ENCODE measurements at regions of chr7 and their contacts with region 1.

Region 1: GRCh38 chr7:142782922-142783900 is 12.4 kb downstream of the PRSS2 start:
- DNase-seq: peak; percentile 75
- H3K4me3 ChIP-seq: peak overlapping the region; percentile 38 to 49 (median 43)
- H3K27ac ChIP-seq: no peak overlapping the region
- H3K4me1 ChIP-seq: no peaks in the 10 kb centered on the region
- H3K27me3 ChIP-seq: no peaks in the 10 kb centered on the region
- CTCF ChIP-seq: peak; percentile 97

Region 2: GRCh38 chr7:142438235-142438922 is 344.8 kb before region 1 on chr7:
- CTCF ChIA-PET with region 1: no interaction called
- dilution Hi-C with region 1: no loop called
- in situ Hi-C with region 1: no loop called
- intact Hi-C with region 1: loop called (anchors 1 kb)
- DNase-seq: peak; percentile 37
- H3K4me3 ChIP-seq: no peak overlapping the region
- H3K27ac ChIP-seq: no peak overlapping the region
- H3K4me1 ChIP-seq: peaks cover 19% of the 10 kb centered on the region
- H3K27me3 ChIP-seq: no peaks in the 10 kb centered on the region
- CTCF ChIP-seq: peak; percentile 79 to 97

Region 3: DNA sequence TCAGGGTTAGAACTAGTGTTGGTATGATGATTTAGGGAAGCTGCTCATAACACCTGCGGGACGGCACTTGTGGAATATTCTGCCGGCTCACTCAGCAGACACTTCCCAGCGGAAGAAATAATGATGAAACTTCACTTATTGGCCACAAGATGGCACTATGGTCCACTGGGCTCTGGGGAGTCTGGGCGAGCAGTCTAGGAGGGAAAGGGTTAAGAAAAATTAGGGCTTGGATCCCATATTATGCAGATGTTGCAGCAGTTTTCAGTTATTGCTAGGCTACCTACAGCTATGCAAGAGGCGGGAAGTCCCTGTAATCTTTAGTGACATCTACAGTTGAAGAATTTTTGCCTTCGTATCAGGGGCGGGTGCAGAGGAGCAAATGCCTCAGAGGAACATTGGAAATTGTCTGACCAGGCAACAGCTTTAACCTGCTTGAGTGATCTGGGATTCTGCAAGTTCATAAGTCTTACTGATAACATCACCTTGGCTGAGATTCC is 286.6 kb before region 1 on chr7:
- CTCF ChIA-PET with region 1: no interaction called
- dilution Hi-C with region 1: no loop called
- in situ Hi-C with region 1: no loop called
- intact Hi-C with region 1: loop called (anchors 1 kb)
- DNase-seq: peak; percentile 46
- H3K4me3 ChIP-seq: no peak overlapping the region
- H3K27ac ChIP-seq: no peak overlapping the region
- H3K4me1 ChIP-seq: peaks cover 22% of the 10 kb centered on the region
- H3K27me3 ChIP-seq: no peaks in the 10 kb centered on the region
- CTCF ChIP-seq: peak; percentile 67 to 74

Region 4: DNA sequence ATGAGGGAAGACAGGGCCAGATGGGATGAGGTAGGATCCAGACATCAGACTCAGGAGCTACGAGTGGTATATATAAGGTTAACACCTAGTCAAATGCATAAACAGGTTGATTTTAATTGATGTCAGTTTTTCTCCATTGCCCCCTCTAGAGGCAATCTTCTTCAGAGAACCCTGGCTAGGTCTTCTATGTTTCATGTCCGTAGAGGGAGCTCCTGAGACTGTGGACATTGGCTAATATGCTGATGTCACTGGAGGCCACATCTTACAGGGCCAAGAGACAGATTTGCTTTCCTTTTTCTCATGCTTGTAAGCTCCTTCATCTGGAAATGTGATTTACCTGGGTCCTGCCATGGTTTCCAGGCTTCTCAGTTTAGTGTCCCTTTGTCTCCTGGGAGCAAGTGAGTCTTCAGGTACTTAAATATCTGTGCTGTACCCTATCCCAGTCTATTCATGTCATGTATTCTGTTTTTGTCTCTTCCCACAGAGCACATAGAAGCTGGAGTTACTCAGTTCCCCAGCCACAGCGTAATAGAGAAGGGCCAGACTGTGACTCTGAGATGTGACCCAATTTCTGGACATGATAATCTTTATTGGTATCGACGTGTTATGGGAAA is 195.5 kb before region 1 on chr7:
- CTCF ChIA-PET with region 1: interaction called, 29 read pairs
- dilution Hi-C with region 1: no loop called
- in situ Hi-C with region 1: no loop called
- intact Hi-C with region 1: no loop called
- DNase-seq: peak; percentile 68
- H3K4me3 ChIP-seq: no peak overlapping the region
- H3K27ac ChIP-seq: no peak overlapping the region
- H3K4me1 ChIP-seq: peaks cover 15% of the 10 kb centered on the region
- H3K27me3 ChIP-seq: no peaks in the 10 kb centered on the region
- CTCF ChIP-seq: peak; percentile 84 to 87

Region 5: DNA sequence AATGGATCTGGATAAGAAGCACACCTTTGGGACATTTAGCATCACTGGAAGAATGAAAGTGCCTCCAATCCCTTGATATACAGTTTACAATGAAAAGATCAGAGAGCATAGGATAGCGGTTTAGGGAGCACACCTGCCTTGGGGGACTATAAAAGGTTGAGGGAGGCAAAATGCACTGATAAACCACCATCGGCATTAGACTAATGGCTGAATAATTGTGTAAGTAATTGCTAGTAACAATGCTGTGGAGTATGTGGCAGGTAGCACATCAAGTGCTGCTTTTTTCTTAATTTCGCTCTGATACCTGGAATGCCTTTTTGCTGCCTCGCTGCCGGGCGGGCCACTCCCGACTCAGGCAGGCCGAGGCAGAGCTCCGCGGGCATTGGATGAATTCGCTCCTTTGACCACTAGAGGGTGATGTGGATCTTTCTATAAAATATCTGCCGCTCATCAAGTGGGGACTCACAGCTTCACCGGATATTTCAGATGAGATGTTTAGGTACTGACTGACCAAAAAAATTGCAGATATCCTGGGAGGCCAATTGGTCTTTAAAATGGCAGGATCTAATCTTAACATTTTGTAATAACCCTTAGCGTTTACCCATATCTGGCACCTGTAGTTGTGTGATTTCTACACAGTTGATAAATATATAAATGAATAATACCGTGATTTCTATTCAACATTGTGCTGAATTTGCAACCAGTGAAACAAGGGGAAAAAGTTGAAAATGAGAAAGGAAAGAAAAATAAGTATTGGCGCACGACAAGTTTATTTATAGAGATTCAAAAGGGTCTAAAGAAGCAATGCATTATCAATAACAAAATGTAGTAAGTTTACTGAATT is 150.7 kb before region 1 on chr7:
- CTCF ChIA-PET with region 1: interaction called, 37 read pairs
- dilution Hi-C with region 1: no loop called
- in situ Hi-C with region 1: loop called in 1 of 2 experiments (anchors 10 kb)
- intact Hi-C with region 1: loop called (anchors 1 kb)
- DNase-seq: peak; percentile 55
- H3K4me3 ChIP-seq: no peak overlapping the region
- H3K27ac ChIP-seq: no peak overlapping the region
- H3K4me1 ChIP-seq: no peaks in the 10 kb centered on the region
- H3K27me3 ChIP-seq: no peaks in the 10 kb centered on the region
- CTCF ChIP-seq: peak; percentile 72 to 74

Region 6: GRCh38 chr7:142811154-142811737 is 28.0 kb after region 1 on chr7:
- CTCF ChIA-PET with region 1: interaction called, 15 read pairs
- dilution Hi-C with region 1: no loop called
- in situ Hi-C with region 1: no loop called
- intact Hi-C with region 1: no loop called
- DNase-seq: peak; percentile 31
- H3K4me3 ChIP-seq: no peak overlapping the region
- H3K27ac ChIP-seq: no peak overlapping the region
- H3K4me1 ChIP-seq: no peaks in the 10 kb centered on the region
- H3K27me3 ChIP-seq: no peaks in the 10 kb centered on the region
- CTCF ChIP-seq: peak; percentile 64 to 65